ENCODE measurements at regions of chr6 and their contacts with region 1.

Region 1: GRCh38 chr6:118968416-118968815 is 33.5 kb upstream of the MCM9 start:
- DNase-seq: no peak
- ATAC-seq: no peak
- H3K4me3 ChIP-seq: no peak overlapping the region
- H3K27ac ChIP-seq: no peak overlapping the region
- H3K4me1 ChIP-seq: no peaks in the 10 kb centered on the region
- H3K27me3 ChIP-seq: no peaks in the 10 kb centered on the region
- CTCF ChIP-seq: peak in 3 of 5 experiments; percentile 12 to 28 (median 14)
- POLR2A ChIP-seq: no peak

Region 2: DNA sequence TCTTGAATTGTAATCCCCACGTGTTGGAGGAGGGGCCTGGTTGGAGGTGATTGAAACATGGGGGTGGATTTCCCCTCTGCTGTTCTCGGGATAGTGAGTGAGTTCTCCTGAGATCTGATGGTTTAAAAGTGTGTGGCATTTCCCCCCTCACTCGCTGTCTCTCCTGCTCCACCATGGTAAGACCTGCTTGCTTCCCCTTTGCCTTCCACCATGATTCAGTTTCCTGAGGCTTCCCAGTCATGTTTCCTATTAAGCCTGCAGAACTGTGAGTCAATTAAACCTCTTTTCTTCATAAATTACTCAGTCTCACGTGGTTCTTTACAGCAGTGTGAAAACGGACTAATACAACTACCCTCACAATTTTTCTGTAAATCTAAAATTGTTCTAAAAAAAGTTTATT is 136.9 kb after region 1 on chr6:
- in situ Hi-C with region 1: loop called (anchors 10 to 25 kb)
- intact Hi-C with region 1: loop called (anchors 1 kb)
- DNase-seq: no peak
- ATAC-seq: no peak
- H3K4me3 ChIP-seq: no peak overlapping the region
- H3K27ac ChIP-seq: no peak overlapping the region
- H3K4me1 ChIP-seq: no peaks in the 10 kb centered on the region
- H3K27me3 ChIP-seq: no peaks in the 10 kb centered on the region
- CTCF ChIP-seq: no peak
- POLR2A ChIP-seq: no peak

Region 3: GRCh38 chr6:119110601-119111548 is 142.5 kb after region 1 on chr6:
- in situ Hi-C with region 1: loop called (anchors 10 to 25 kb)
- intact Hi-C with region 1: loop called (anchors 1 kb)
- DNase-seq: no peak
- ATAC-seq: peak; percentile 58 to 80
- H3K4me3 ChIP-seq: no peak overlapping the region
- H3K27ac ChIP-seq: no peak overlapping the region
- H3K4me1 ChIP-seq: no peaks in the 10 kb centered on the region
- H3K27me3 ChIP-seq: no peaks in the 10 kb centered on the region
- CTCF ChIP-seq: peak; percentile 44 to 64 (median 56)
- POLR2A ChIP-seq: no peak

Measured in gastrocnemius medialis (tissue), 4 donors.